Gastrocnemius medialis (tissue), 4 donors: ENCODE measurements at regions of chr1 and their contacts with region 1.

Region 1: DNA sequence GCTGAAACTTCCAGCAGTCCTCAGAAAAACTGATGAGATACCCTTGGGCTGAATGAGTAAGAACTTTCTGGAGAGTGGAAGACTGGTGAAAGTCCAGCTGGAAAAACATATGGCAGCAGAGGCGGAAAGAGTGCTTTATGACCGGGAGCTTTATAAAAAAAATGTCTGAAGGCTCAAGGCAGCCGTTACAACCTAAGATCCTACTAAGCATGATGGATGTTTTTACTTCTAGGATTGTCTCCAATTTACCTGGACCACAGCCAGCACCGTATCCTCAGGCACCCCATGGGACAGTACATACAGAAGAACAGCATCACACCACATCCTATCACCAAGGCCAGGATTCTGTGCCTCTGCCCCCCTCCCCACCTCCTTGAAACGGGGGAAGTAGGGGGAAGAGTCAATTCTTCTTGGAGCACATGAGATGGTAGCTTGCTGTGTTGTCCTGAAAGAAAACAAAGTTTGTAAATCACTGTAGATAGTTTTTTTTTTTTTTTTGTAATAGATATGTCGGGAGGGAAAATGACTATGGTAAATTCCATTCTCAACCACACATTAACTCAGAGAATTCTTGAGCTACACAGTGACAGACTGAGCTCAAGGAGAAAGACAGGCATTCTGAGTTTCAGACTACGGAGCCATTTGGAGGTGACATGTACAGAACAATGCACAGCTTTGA is 11.8 kb upstream of the IRF2BP2 start:
- DNase-seq: no peak
- ATAC-seq: no peak
- H3K4me3 ChIP-seq: no peak overlapping the region
- H3K27ac ChIP-seq: peak overlapping the region; percentile 24 to 40 (median 26)
- H3K4me1 ChIP-seq: peaks cover 41 to 52% of the 10 kb centered on the region in 2 donors
- H3K27me3 ChIP-seq: no peaks in the 10 kb centered on the region
- CTCF ChIP-seq: no peak
- POLR2A ChIP-seq: no peak

Region 2: GRCh38 chr1:234553156-234553863 is 68.5 kb before region 1 on chr1:
- in situ Hi-C with region 1: no loop called
- intact Hi-C with region 1: no loop called
- DNase-seq: no peak
- ATAC-seq: no peak
- H3K4me3 ChIP-seq: no peak overlapping the region
- H3K27ac ChIP-seq: no peak overlapping the region
- H3K4me1 ChIP-seq: no peaks in the 10 kb centered on the region
- H3K27me3 ChIP-seq: no peaks in the 10 kb centered on the region
- CTCF ChIP-seq: no peak
- POLR2A ChIP-seq: no peak

Region 3: DNA sequence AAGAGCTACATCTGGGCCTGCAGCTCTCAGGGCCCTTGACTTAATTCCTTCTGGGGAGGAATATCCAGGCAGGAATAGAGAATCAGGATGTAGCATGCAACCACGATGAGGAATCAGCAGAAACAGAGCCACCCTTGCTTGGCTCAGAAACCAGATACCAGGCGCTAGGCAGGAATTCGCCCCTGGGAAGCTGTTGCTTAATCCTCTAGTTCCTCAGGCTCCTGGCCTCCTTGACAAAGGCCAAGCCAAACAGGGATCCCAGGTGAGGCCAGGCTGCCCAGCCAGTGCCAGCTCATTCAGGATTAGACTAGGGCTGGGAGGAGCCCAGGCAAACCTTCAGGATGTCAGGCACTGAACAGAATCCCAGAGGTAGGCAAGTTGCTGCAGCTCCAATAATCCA is 36.3 kb after region 1 on chr1:
- in situ Hi-C with region 1: no loop called
- intact Hi-C with region 1: no loop called
- DNase-seq: peak in 1 of 2 donors; percentile 58
- ATAC-seq: peak; percentile 53 to 73
- H3K4me3 ChIP-seq: no peak overlapping the region
- H3K27ac ChIP-seq: peak overlapping the region in 1 of 4 donors; percentile 20
- H3K4me1 ChIP-seq: peaks cover 0 to 13% of the 10 kb centered on the region in 2 donors
- H3K27me3 ChIP-seq: no peaks in the 10 kb centered on the region
- CTCF ChIP-seq: no peak
- POLR2A ChIP-seq: no peak

Region 4: GRCh38 chr1:234683861-234684632 is 62.3 kb after region 1 on chr1:
- in situ Hi-C with region 1: no loop called
- intact Hi-C with region 1: loop called (anchors 2 kb)
- DNase-seq: peak; percentile 85 to 91
- ATAC-seq: peak; percentile 100
- H3K4me3 ChIP-seq: no peak overlapping the region
- H3K27ac ChIP-seq: peak overlapping the region; percentile 67 to 83 (median 75)
- H3K4me1 ChIP-seq: peaks cover 8 to 11% of the 10 kb centered on the region in 2 donors
- H3K27me3 ChIP-seq: no peaks in the 10 kb centered on the region
- CTCF ChIP-seq: no peak
- POLR2A ChIP-seq: no peak

Region 5: DNA sequence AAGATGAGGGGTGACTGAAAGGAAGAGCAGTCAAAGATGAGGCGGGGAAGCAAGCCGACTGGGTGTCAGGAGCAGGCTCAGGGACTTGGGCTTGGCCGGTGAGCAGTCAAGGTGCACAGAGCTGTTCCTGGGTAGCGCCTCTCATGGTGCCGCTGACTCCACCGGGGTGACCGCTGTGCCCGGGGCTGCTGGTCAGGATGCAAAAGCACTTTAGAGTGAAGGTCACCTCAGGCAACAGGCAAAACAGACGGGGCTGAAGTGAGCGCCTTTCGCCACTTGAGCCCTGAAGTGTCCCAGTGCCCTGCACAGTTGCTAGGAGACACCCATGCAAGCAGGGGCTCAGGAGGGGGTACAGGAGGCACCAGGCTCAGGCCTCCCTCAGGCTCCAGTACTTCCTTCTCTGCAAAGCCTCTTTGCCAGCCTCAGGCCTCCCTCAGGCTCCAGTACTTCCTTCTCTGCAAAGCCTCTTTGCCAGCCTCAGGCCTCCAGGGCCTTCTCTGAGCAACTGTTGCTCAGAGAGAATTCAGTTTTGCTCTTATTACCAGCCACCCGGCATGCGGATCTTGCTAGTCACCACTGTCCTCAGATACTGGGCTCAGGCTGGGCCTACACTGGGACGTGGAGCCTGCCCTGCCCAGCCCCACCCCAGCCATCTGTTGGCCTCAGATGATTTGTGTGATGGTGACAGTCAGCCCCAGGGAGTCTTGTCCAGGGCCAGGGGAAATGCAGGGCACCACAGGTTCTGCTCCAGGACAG is 87.9 kb after region 1 on chr1:
- in situ Hi-C with region 1: loop called in 2 of 4 experiments (anchors 10 kb)
- intact Hi-C with region 1: no loop called
- DNase-seq: peak in 1 of 2 donors; percentile 36
- ATAC-seq: peak; percentile 38 to 66
- H3K4me3 ChIP-seq: no peak overlapping the region
- H3K27ac ChIP-seq: peak overlapping the region in 3 of 4 donors; percentile 45 to 69 (median 55)
- H3K4me1 ChIP-seq: no peaks in the 10 kb centered on the region
- H3K27me3 ChIP-seq: no peaks in the 10 kb centered on the region
- CTCF ChIP-seq: no peak
- POLR2A ChIP-seq: no peak

Region 6: GRCh38 chr1:234772345-234773147 is 150.8 kb after region 1 on chr1:
- in situ Hi-C with region 1: no loop called
- intact Hi-C with region 1: loop called (anchors 5 kb)
- DNase-seq: peak; percentile 90 to 92
- ATAC-seq: peak; percentile 99
- H3K4me3 ChIP-seq: no peak overlapping the region
- H3K27ac ChIP-seq: peak overlapping the region; percentile 63 to 77 (median 70)
- H3K4me1 ChIP-seq: peaks cover 13 to 18% of the 10 kb centered on the region in 2 donors
- H3K27me3 ChIP-seq: peaks cover 12 to 13% (median 13%) of the 10 kb centered on the region in 3 donors
- CTCF ChIP-seq: no peak
- POLR2A ChIP-seq: peak; percentile 43 to 66